Heart right ventricle (tissue), 16 donors: ENCODE measurements at regions of chr4 and their contacts with region 1.

Region 1: DNA sequence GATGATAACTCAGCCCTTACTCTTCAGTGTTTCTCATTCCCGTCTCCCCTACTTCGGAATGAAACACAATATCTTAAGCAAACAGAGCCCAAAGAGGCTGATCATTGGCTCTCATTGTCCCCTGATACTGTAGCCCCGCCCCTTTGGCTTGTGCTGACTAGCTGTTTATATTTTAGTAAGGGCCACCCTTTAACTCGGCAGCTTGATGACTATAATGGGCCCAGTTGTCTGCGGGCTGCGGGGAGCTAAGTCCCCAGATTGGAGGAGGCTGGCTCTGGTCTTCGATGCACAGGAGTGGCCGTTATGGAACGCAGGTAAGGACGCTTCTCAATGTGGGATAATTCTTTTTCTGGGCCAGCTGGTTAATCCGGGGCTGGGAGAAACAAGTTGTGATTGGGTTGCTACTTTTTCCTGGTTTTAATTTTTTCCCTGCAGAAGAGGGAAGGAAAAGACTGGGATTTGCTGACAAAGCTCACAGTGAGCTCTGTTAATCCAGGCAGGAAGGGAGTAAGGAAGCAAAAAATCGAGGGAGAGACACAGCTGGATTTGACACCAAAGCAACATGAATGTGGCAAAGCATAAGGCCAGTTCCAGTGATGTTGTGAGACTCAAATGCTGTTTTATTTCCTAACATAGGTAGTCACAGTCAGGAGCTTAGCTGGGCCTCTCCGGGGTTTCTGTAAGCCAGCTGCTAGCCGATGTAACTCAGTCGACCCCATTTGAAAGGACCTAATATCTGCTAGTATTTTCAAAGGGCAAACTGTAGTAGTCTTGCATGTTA is at the start of gene TRIM2:
- DNase-seq: peak; percentile 58 to 80
- ATAC-seq: peak; percentile 81 to 94 (median 88)
- H3K4me3 ChIP-seq: peak within 1 kb of the TSS in 9 of 10 donors; percentile 22 to 50 (median 40)
- H3K27ac ChIP-seq: peak within 1 kb of the TSS in 6 of 10 donors; percentile 8 to 56 (median 37)
- H3K4me1 ChIP-seq: peaks cover 0 to 32% (median 3%) of the 10 kb centered on the region in 9 donors
- H3K27me3 ChIP-seq: no peaks in the 10 kb centered on the region
- CTCF ChIP-seq: no peak
- total RNA-seq, gene TRIM2: 15.2 to 33.2 (median 20.7) TPM

Region 2: GRCh38 chr4:153005899-153006381 is 198.5 kb before region 1 on chr4:
- intact Hi-C with region 1: no loop called
- DNase-seq: no peak
- ATAC-seq: peak in 5 of 8 donors; percentile 31 to 67 (median 49)
- H3K4me3 ChIP-seq: no peak overlapping the region
- H3K27ac ChIP-seq: no peak overlapping the region
- H3K4me1 ChIP-seq: peaks cover 0 to 2% (median 0%) of the 10 kb centered on the region in 9 donors
- H3K27me3 ChIP-seq: peaks cover 0 to 17% (median 0%) of the 10 kb centered on the region in 7 donors
- CTCF ChIP-seq: no peak

Region 3: GRCh38 chr4:153095448-153096204 is 108.8 kb before region 1 on chr4:
- intact Hi-C with region 1: no loop called
- DNase-seq: no peak
- ATAC-seq: no peak
- H3K4me3 ChIP-seq: no peak overlapping the region
- H3K27ac ChIP-seq: no peak overlapping the region
- H3K4me1 ChIP-seq: no peaks in the 10 kb centered on the region
- H3K27me3 ChIP-seq: no peaks in the 10 kb centered on the region
- CTCF ChIP-seq: no peak

Region 4: GRCh38 chr4:153142700-153143438 is 61.6 kb before region 1 on chr4:
- intact Hi-C with region 1: loop called in 1 of 10 experiments (anchors 10 kb)
- DNase-seq: peak; percentile 62 to 72
- ATAC-seq: peak; percentile 75 to 92 (median 78)
- H3K4me3 ChIP-seq: peak overlapping the region in 3 of 10 donors; percentile 21 to 31 (median 22)
- H3K27ac ChIP-seq: no peak overlapping the region
- H3K4me1 ChIP-seq: peaks cover 0 to 15% (median 9%) of the 10 kb centered on the region in 9 donors
- H3K27me3 ChIP-seq: peaks cover 0 to 6% (median 0%) of the 10 kb centered on the region in 7 donors
- CTCF ChIP-seq: peak; percentile 69 to 94 (median 84)

Region 5: DNA sequence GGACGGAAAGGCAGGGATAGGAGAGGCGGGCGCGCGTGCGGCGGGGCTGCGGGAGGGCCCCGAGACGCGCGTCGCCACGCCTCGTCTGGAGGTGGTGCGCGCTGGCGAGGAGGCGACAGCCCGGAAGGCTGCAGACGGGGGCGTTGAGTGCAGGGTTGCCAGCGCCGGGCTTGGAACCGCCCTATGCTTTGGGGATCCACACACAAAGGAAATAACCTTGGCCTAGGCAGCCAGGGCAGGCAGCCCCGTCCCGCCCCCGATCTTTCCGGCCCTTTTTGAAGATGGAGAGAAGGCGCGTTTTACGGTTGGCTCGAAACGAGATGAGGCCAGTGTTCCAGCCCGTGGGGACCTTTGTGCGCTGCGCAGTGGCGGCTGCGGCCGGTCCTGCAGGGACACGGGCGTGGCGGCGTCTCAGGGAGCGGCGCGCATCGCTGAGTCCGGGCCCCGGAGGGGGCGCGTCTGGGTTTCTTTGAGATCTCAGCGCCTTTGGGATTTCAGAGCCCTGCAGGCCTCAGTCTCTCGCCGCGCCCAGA is 51.0 kb before region 1 on chr4:
- intact Hi-C with region 1: loop called in 6 of 10 experiments (anchors 5 to 10 kb)
- DNase-seq: peak; percentile 23 to 30
- ATAC-seq: peak; percentile 68 to 88 (median 81)
- H3K4me3 ChIP-seq: peak overlapping the region; percentile 12 to 74 (median 60)
- H3K27ac ChIP-seq: no peak overlapping the region
- H3K4me1 ChIP-seq: peaks cover 0 to 28% (median 22%) of the 10 kb centered on the region in 9 donors
- H3K27me3 ChIP-seq: peaks cover 0 to 64% (median 21%) of the 10 kb centered on the region in 7 donors
- CTCF ChIP-seq: peak in 1 of 9 donors; percentile 6

Region 6: GRCh38 chr4:153241970-153242838 is 37.8 kb after region 1 on chr4:
- intact Hi-C with region 1: loop called in 1 of 10 experiments (anchors 5 kb)
- DNase-seq: no peak
- ATAC-seq: peak; percentile 52 to 93 (median 66)
- H3K4me3 ChIP-seq: no peak overlapping the region
- H3K27ac ChIP-seq: peak overlapping the region in 9 of 10 donors; percentile 16 to 61 (median 30)
- H3K4me1 ChIP-seq: peaks cover 5 to 34% (median 29%) of the 10 kb centered on the region in 9 donors
- H3K27me3 ChIP-seq: no peaks in the 10 kb centered on the region
- CTCF ChIP-seq: no peak